ENCODE measurements at regions of chr10 and their contacts with region 1.

Region 1: GRCh38 chr10:79170993-79171392 is 102.2 kb downstream of the ZMIZ1 start:
- DNase-seq: no peak
- H3K4me3 ChIP-seq: no peak overlapping the region
- H3K27ac ChIP-seq: no peak overlapping the region
- H3K4me1 ChIP-seq: peaks cover 8% of the 10 kb centered on the region
- H3K27me3 ChIP-seq: no peaks in the 10 kb centered on the region
- CTCF ChIP-seq: no peak
- POLR2A ChIP-seq: no peak

Region 2: GRCh38 chr10:78931321-78932053 is 239.5 kb before region 1 on chr10:
- CTCF ChIA-PET with region 1: no interaction called
- POLR2A ChIA-PET with region 1: no interaction called
- dilution Hi-C with region 1: no loop called
- intact Hi-C with region 1: no loop called
- DNase-seq: peak; percentile 52
- H3K4me3 ChIP-seq: no peak overlapping the region
- H3K27ac ChIP-seq: peak overlapping the region; percentile 17
- H3K4me1 ChIP-seq: peaks cover 17% of the 10 kb centered on the region
- H3K27me3 ChIP-seq: no peaks in the 10 kb centered on the region
- CTCF ChIP-seq: no peak
- POLR2A ChIP-seq: no peak

Region 3: GRCh38 chr10:78953113-78953798 is 217.7 kb before region 1 on chr10:
- CTCF ChIA-PET with region 1: no interaction called
- POLR2A ChIA-PET with region 1: no interaction called
- dilution Hi-C with region 1: no loop called
- intact Hi-C with region 1: no loop called
- DNase-seq: no peak
- H3K4me3 ChIP-seq: no peak overlapping the region
- H3K27ac ChIP-seq: no peak overlapping the region
- H3K4me1 ChIP-seq: peaks cover 3% of the 10 kb centered on the region
- H3K27me3 ChIP-seq: no peaks in the 10 kb centered on the region
- CTCF ChIP-seq: no peak
- POLR2A ChIP-seq: no peak

Region 4: GRCh38 chr10:79101560-79102497 is 69.2 kb before region 1 on chr10:
- CTCF ChIA-PET with region 1: no interaction called
- POLR2A ChIA-PET with region 1: no interaction called
- dilution Hi-C with region 1: loop called (anchors 5 kb)
- intact Hi-C with region 1: no loop called
- DNase-seq: no peak
- H3K4me3 ChIP-seq: no peak overlapping the region
- H3K27ac ChIP-seq: no peak overlapping the region
- H3K4me1 ChIP-seq: peaks cover 17% of the 10 kb centered on the region
- H3K27me3 ChIP-seq: no peaks in the 10 kb centered on the region
- CTCF ChIP-seq: no peak
- POLR2A ChIP-seq: no peak